Activated B cell treated with CpG ODN at 0.5 μM for 24 hours (primary cell): ENCODE measurements at regions of chr7 and their contacts with region 1.

Region 1: GRCh38 chr7:140517546-140518369 is 38.5 kb upstream of the MKRN1 start:
- DNase-seq: peak; percentile 57
- ATAC-seq: peak; percentile 67
- H3K4me3 Mint-ChIP-seq: peak overlapping the region; percentile 42
- H3K27ac Mint-ChIP-seq: no peak overlapping the region
- H3K4me1 Mint-ChIP-seq: peaks cover 4% of the 10 kb centered on the region
- H3K27me3 Mint-ChIP-seq: peaks cover 11% of the 10 kb centered on the region
- CTCF ChIP-seq: no peak

Region 2: DNA sequence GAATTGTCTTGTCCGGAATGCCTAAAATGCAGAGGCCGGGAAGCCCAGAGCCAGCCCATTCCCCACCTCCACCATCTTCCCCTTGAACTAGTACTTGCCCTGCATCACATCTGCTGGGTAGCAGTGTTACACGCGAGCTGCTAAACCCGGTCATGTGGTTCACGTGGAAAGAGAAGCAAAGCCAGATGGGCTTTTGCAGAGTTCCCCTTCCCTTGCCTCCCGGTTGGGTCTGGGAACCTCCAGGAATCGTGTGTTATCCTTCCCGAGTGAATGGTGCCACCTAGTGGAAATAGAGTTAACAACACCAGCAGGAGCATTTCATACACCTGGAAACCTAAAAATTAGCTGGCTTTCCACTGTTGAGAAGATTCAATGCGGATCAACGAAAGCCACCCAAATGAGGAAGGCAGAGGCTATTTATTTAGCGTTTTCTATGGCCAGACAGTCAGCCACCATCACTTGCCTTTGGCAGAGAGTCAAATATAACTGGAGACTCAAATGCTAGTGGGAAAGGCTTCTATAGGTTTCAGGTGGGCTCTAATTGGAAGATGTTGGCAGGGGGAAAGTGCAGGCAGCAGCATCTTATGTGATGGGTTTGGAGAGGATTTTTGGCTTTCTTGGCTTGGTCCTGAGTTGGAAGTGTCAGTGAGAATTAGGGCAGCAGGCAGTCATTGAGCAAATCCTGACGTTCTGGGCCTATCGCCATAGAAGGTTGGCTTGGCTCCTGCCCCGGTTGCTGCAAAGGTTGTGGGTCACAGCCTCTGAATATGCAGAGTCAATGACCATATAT is 135.8 kb after region 1 on chr7:
- CTCF ChIA-PET with region 1: interaction called, 50 read pairs
- POLR2A ChIA-PET with region 1: no interaction called
- intact Hi-C with region 1: loop called (anchors 1 kb)
- DNase-seq: peak; percentile 28
- ATAC-seq: no peak
- H3K4me3 Mint-ChIP-seq: no peak overlapping the region
- H3K27ac Mint-ChIP-seq: no peak overlapping the region
- H3K4me1 Mint-ChIP-seq: peaks cover 20% of the 10 kb centered on the region
- H3K27me3 Mint-ChIP-seq: peaks cover 2% of the 10 kb centered on the region
- CTCF ChIP-seq: peak; percentile 31

Region 3: GRCh38 chr7:140696680-140697446 is 179.1 kb after region 1 on chr7 and contains the start of gene NDUFB2:
- CTCF ChIA-PET with region 1: no interaction called
- POLR2A ChIA-PET with region 1: interaction called, 3 read pairs
- intact Hi-C with region 1: loop called (anchors 1 kb)
- DNase-seq: peak; percentile 90
- ATAC-seq: peak; percentile 86
- H3K4me3 Mint-ChIP-seq: peak within 1 kb of the TSS; percentile 94
- H3K27ac Mint-ChIP-seq: peak within 1 kb of the TSS; percentile 98
- H3K4me1 Mint-ChIP-seq: peaks cover 34% of the 10 kb centered on the region
- H3K27me3 Mint-ChIP-seq: no peaks in the 10 kb centered on the region
- CTCF ChIP-seq: no peak
- total RNA-seq, gene NDUFB2: 140 and 168 TPM in 2 replicates

Region 4: DNA sequence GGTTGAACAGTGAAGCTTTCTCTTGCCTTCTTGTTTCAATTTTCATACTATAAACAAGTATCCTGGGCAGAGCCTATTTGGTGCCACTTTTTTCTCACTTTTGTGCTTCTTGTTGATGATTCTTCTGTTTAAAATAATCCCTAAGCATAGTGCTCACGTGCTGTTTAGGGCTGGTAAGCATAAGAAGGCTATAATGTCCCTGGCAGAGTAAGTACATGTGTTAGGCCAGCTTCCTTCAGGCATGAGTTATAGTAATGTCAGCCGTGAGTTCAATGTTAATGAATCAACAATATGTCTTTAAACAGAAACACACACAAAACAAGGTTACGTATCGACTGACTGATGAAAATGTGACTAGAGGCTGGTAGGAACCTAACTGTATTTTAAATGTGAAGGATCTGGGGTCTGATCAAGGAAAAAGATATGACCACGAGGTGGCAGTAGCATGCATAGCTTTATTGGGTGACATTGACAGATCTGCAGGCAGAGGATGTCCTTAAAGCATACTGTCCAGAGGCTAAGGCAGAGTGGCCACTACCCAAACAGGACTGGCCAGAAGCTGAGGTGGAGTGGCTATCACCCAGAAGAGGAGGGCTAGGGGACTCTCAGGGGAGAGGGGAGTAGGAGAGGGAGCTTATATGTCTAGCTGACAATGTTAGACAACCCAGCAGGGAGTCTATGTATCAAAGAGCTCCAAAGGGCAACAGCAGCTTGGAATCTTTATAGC is 293.2 kb after region 1 on chr7:
- CTCF ChIA-PET with region 1: interaction called, 3 read pairs
- POLR2A ChIA-PET with region 1: no interaction called
- intact Hi-C with region 1: loop called (anchors 1 kb)
- DNase-seq: peak; percentile 30
- ATAC-seq: peak; percentile 84
- H3K4me3 Mint-ChIP-seq: no peak overlapping the region
- H3K27ac Mint-ChIP-seq: peak overlapping the region; percentile 59
- H3K4me1 Mint-ChIP-seq: peaks cover 1% of the 10 kb centered on the region
- H3K27me3 Mint-ChIP-seq: no peaks in the 10 kb centered on the region
- CTCF ChIP-seq: no peak